Colonic mucosa (tissue), 4 donors: ENCODE measurements at regions of chr22 and their contacts with region 1.

Region 1: GRCh38 chr22:43035232-43035631 is 20.3 kb upstream of the PACSIN2 start:
- DNase-seq: no peak
- H3K4me3 ChIP-seq: no peak overlapping the region
- H3K27ac ChIP-seq: no peak overlapping the region
- H3K4me1 ChIP-seq: no peaks in the 10 kb centered on the region
- H3K27me3 ChIP-seq: no peaks in the 10 kb centered on the region
- CTCF ChIP-seq: no peak

Region 2: GRCh38 chr22:42868751-42869251 is 166.4 kb before region 1 on chr22:
- intact Hi-C with region 1: loop called (anchors 2 kb)
- DNase-seq: no peak
- H3K4me3 ChIP-seq: no peak overlapping the region
- H3K27ac ChIP-seq: no peak overlapping the region
- H3K4me1 ChIP-seq: no peaks in the 10 kb centered on the region
- H3K27me3 ChIP-seq: no peaks in the 10 kb centered on the region
- CTCF ChIP-seq: no peak